ENCODE measurements at regions of chr7 and their contacts with region 1.

Region 1: DNA sequence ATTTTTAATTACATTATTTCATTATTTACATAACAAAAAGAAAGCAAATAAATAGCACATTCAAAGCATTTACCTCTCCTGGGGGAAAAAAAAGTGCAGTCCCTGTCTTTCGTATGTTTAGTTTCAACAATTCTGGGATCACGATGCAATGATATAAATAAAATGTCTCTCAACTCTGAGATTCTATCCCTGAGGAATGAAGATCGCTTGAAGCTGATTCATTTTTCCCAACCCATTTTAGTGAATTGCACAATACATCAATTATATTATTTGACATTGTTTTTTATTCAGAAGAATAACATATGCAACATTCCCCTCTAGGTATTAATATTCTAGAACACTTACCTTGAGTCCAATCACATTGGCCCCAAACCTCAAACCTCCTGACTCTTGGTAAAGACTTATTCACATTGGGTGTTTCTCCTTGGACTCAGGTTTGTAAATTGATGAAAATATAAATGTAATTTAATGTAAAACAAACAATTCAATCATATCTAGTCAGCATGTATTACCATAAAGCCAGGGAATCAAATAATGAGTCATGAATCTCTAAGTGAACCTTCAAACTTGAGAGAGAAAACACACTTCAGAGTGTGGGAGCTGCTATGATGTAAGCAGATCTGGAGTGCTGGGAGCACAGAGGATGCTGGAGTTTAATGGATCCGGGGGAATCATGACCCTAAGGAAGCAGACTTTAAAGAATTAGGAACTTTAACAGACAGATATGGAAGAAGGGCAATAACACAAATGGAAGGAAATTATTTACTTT is 5.3 kb upstream of the SCIN start:
- DNase-seq: peak; percentile 64
- ATAC-seq: peak; percentile 80
- H3K4me3 ChIP-seq: peak overlapping the region; percentile 26; the same call in 1 of the 2 replicates
- H3K27ac ChIP-seq: peak overlapping the region; percentile 77
- H3K4me1 ChIP-seq: peaks cover 27% of the 10 kb centered on the region
- H3K27me3 ChIP-seq: no peaks in the 10 kb centered on the region
- CTCF ChIP-seq: no peak

Region 2: DNA sequence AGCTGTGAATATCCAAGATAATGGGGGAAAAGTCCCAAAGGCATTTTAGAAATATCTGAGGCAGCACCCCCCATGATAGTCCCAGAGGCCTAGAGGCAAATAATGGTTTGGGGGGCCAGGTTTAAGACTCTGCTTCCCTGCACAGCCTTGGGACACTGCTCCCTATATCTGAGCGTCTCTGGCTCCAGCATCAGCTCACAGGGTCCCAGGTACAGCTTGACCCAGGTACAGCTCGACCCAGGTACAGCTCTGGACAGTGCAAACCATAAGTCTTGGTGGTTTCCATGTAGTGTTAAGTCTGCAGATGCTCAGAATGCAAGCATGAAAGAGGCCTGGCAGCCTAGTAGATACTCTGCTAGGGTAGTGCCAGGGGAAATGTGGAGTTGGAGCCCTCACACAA is 114.6 kb before region 1 on chr7:
- CTCF ChIA-PET with region 1: no interaction called
- POLR2A ChIA-PET with region 1: no interaction called
- intact Hi-C with region 1: no loop called
- DNase-seq: no peak
- ATAC-seq: no peak
- H3K4me3 ChIP-seq: no peak overlapping the region
- H3K27ac ChIP-seq: no peak overlapping the region
- H3K4me1 ChIP-seq: no peaks in the 10 kb centered on the region
- H3K27me3 ChIP-seq: no peaks in the 10 kb centered on the region
- CTCF ChIP-seq: no peak

Region 3: GRCh38 chr7:12531784-12532183 is 33.4 kb before region 1 on chr7:
- CTCF ChIA-PET with region 1: no interaction called
- POLR2A ChIA-PET with region 1: no interaction called
- intact Hi-C with region 1: no loop called
- DNase-seq: no peak
- ATAC-seq: no peak
- H3K4me3 ChIP-seq: no peak overlapping the region
- H3K27ac ChIP-seq: no peak overlapping the region
- H3K4me1 ChIP-seq: no peaks in the 10 kb centered on the region
- H3K27me3 ChIP-seq: no peaks in the 10 kb centered on the region
- CTCF ChIP-seq: no peak

Region 4: GRCh38 chr7:12549106-12549505 is 16.1 kb before region 1 on chr7:
- CTCF ChIA-PET with region 1: no interaction called
- POLR2A ChIA-PET with region 1: no interaction called
- intact Hi-C with region 1: loop called (anchors 2 kb)
- DNase-seq: no peak
- ATAC-seq: no peak
- H3K4me3 ChIP-seq: no peak overlapping the region
- H3K27ac ChIP-seq: no peak overlapping the region
- H3K4me1 ChIP-seq: peaks cover 13% of the 10 kb centered on the region
- H3K27me3 ChIP-seq: no peaks in the 10 kb centered on the region
- CTCF ChIP-seq: no peak

Region 5: DNA sequence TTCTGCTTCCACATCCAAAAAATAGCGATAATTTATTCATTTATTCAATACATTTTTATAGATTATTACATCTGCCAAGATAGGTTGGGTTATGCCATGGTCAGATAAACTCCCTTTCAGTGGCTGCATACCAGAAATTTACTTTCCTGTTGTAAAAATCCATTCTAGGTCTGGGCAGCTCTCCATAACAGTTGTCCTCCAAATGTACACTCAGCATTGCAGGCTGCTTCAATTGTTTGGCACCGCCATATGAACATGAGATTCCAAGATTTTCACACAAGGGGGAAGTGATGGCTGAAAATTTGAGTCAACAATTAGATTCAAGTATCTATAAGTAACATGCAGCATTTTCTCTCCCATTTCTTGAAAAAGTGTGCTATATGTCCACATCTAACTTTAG is 855.5 kb after region 1 on chr7:
- CTCF ChIA-PET with region 1: no interaction called
- POLR2A ChIA-PET with region 1: no interaction called
- intact Hi-C with region 1: no loop called
- DNase-seq: no peak
- ATAC-seq: no peak
- H3K4me3 ChIP-seq: no peak overlapping the region
- H3K27ac ChIP-seq: no peak overlapping the region
- H3K4me1 ChIP-seq: no peaks in the 10 kb centered on the region
- H3K27me3 ChIP-seq: no peaks in the 10 kb centered on the region
- CTCF ChIP-seq: no peak